HEK293T (cell line): ENCODE measurements at regions of chr12 and their contacts with region 1.

Region 1: GRCh38 chr12:109597795-109598427 is 24.3 kb downstream of the MVK start:
- DNase-seq: peak; percentile 94

Region 2: DNA sequence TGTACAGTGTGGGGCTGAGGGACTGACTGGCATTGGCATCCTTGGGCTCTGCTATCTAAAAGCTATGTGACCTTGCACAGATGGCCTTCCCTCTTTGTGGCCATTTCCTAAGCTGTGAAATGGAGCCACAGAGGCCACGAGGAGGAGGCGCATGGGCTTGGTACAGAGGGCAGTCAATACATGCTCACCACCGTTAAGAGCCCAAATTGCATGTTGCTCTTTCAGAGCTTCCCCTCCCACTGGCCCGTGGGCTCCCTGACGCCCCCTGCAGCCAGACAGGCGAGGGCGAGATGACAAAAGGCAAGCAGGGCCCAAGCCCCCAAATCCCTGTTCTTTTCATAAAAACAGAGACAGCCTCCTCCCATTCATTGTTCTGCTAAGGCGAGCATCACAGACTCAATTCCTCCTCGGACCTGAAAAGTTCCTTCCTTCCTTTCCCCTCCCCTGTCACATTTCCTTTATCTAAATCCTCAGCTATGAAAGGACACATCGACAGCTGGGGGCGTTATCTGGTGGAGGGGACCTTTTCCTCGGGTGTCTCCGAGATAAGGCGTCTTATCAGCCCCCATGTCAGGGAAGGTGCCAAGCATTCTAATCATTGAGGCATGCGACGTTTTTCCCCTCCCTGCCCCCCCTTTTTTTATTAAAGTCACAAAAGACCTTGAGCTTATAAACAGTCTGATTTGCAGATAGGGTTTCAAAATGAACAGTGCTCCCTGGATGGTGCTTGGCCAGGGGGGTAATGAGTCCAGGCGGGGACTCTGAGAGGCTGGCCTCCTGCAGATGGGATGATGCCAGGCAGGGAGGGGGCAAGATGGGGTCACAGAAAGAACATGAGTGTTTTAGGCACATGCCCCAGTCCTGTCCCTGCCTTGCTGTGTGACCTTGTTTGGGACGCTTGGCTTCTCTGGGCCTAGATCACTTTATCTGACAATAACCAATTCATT is 142.1 kb after region 1 on chr12:
- CTCF ChIA-PET with region 1: interaction called, 22 read pairs
- POLR2A ChIA-PET with region 1: no interaction called
- DNase-seq: peak; percentile 62

Region 3: GRCh38 chr12:109775172-109775881 is 177.4 kb after region 1 on chr12:
- CTCF ChIA-PET with region 1: interaction called, 18 read pairs
- POLR2A ChIA-PET with region 1: no interaction called
- DNase-seq: peak; percentile 77

Region 4: GRCh38 chr12:109944561-109945359 is 346.8 kb after region 1 on chr12:
- CTCF ChIA-PET with region 1: no interaction called
- POLR2A ChIA-PET with region 1: no interaction called
- DNase-seq: no peak